ENCODE measurements at regions of chr21 and their contacts with region 1.

Region 1: DNA sequence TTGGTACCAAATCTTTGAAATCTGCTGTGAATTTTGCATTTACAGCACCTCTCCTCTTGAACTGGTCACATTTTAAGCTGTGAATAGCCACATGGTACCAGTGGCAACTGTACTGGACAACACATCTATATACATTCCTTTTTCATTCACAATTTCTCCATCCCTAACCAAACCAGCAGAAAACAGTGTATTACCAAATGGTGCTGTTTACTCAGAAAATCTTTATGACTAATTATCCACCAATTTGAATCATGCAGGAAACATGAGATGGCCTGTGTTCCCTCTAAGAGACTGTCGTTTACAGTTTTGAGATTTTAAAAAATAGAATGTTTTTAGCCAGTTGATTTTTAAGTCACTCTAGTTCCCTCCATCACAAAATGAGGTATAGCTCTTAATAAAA is 17.6 kb upstream of the CCT8 start:
- DNase-seq: no peak
- ATAC-seq: no peak
- H3K4me3 ChIP-seq: no peak overlapping the region
- H3K4me3 Mint-ChIP-seq: no peak overlapping the region
- H3K27ac ChIP-seq: no peak overlapping the region
- H3K27ac Mint-ChIP-seq: no peak overlapping the region
- H3K4me1 ChIP-seq: no peaks in the 10 kb centered on the region
- H3K4me1 Mint-ChIP-seq: peaks cover 0 to 3% (median 0%) of the 10 kb centered on the region in 3 donors
- H3K27me3 ChIP-seq: no peaks in the 10 kb centered on the region
- H3K27me3 Mint-ChIP-seq: no peaks in the 10 kb centered on the region

Region 2: GRCh38 chr21:29056005-29056404 is 35.0 kb before region 1 on chr21:
- CTCF ChIA-PET with region 1: no interaction called
- POLR2A ChIA-PET with region 1: no interaction called
- DNase-seq: no peak
- ATAC-seq: no peak
- H3K4me3 ChIP-seq: no peak overlapping the region
- H3K4me3 Mint-ChIP-seq: no peak overlapping the region
- H3K27ac ChIP-seq: no peak overlapping the region
- H3K27ac Mint-ChIP-seq: no peak overlapping the region
- H3K4me1 ChIP-seq: no peaks in the 10 kb centered on the region
- H3K4me1 Mint-ChIP-seq: no peaks in the 10 kb centered on the region
- H3K27me3 ChIP-seq: no peaks in the 10 kb centered on the region
- H3K27me3 Mint-ChIP-seq: no peaks in the 10 kb centered on the region

Region 3: DNA sequence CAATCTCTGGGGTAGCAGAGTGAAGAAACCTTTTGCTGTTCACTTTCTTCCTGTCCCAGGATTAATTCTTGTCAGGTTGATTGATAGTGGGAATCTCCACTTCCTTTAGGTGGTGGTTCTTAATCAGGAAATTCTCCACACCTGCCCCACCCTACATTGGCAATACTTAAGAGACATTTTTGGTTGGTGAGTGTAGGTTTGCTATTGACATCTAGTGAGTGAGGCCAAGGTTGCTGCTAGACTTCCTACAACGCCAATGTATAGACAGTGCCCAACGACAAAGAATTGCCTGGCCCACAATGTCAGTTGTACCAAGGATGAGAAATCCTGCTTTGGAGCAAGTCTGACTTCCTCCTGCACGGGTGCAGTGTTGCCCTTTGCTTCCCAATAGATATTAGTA is 77.9 kb after region 1 on chr21:
- CTCF ChIA-PET with region 1: no interaction called
- POLR2A ChIA-PET with region 1: no interaction called
- DNase-seq: no peak
- ATAC-seq: no peak
- H3K4me3 ChIP-seq: no peak overlapping the region
- H3K4me3 Mint-ChIP-seq: no peak overlapping the region
- H3K27ac ChIP-seq: no peak overlapping the region
- H3K27ac Mint-ChIP-seq: no peak overlapping the region
- H3K4me1 ChIP-seq: peaks cover 0 to 2% of the 10 kb centered on the region in 2 experiments
- H3K4me1 Mint-ChIP-seq: peaks cover 10 to 13% (median 10%) of the 10 kb centered on the region in 3 donors
- H3K27me3 ChIP-seq: no peaks in the 10 kb centered on the region
- H3K27me3 Mint-ChIP-seq: no peaks in the 10 kb centered on the region

Region 4: GRCh38 chr21:29219165-29219770 is 128.2 kb after region 1 on chr21:
- CTCF ChIA-PET with region 1: interaction called in 1 of 2 experiments, 10 read pairs
- POLR2A ChIA-PET with region 1: no interaction called
- DNase-seq: no peak
- ATAC-seq: no peak
- H3K4me3 ChIP-seq: no peak overlapping the region
- H3K4me3 Mint-ChIP-seq: no peak overlapping the region
- H3K27ac ChIP-seq: no peak overlapping the region
- H3K27ac Mint-ChIP-seq: no peak overlapping the region
- H3K4me1 ChIP-seq: no peaks in the 10 kb centered on the region
- H3K4me1 Mint-ChIP-seq: no peaks in the 10 kb centered on the region
- H3K27me3 ChIP-seq: no peaks in the 10 kb centered on the region
- H3K27me3 Mint-ChIP-seq: no peaks in the 10 kb centered on the region

Region 5: DNA sequence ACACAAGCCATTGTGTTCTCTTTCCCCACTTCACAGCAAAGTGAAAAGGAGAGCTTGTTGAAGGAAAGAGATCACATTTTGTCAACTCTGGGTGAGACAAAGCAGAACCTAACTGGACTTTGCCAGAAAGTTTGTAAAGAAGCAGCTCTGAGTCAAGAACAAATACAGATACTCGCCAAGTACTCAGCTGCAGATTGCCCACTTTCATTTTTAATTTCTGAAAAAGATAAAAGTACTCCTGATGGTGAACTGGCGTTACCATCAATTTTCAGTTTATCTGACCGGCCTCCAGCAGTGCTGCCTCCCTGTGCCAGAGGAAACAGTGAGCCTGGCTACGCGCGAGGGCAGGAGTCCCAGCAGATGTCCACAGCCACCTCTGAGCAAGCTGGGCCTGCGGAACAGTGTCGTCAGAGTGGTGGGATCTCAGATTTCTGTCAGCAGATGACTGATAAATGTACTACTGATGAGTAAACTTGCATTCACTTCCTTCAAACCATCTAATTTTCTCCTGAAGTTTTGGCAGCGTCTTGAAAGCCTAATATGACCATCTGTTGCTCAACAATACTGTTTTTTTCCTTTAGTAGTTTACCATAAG is 251.4 kb after region 1 on chr21:
- CTCF ChIA-PET with region 1: interaction called in 1 of 2 experiments, 11 read pairs
- POLR2A ChIA-PET with region 1: interaction called in 1 of 2 experiments, 3 read pairs
- DNase-seq: no peak
- ATAC-seq: no peak
- H3K4me3 ChIP-seq: no peak overlapping the region
- H3K4me3 Mint-ChIP-seq: peak overlapping the region in 1 of 3 donors; percentile 24
- H3K27ac ChIP-seq: no peak overlapping the region
- H3K27ac Mint-ChIP-seq: no peak overlapping the region
- H3K4me1 ChIP-seq: no peaks in the 10 kb centered on the region
- H3K4me1 Mint-ChIP-seq: peaks cover 11 to 20% (median 18%) of the 10 kb centered on the region in 3 donors
- H3K27me3 ChIP-seq: no peaks in the 10 kb centered on the region
- H3K27me3 Mint-ChIP-seq: no peaks in the 10 kb centered on the region

Region 6: GRCh38 chr21:29372063-29372802 is 281.2 kb after region 1 on chr21:
- CTCF ChIA-PET with region 1: interaction called, 13 to 16 read pairs
- POLR2A ChIA-PET with region 1: no interaction called
- DNase-seq: peak in 30 of 35 experiments; percentile 9 to 86 (median 34)
- ATAC-seq: peak; percentile 57 to 87 (median 69)
- H3K4me3 ChIP-seq: no peak overlapping the region
- H3K4me3 Mint-ChIP-seq: no peak overlapping the region
- H3K27ac ChIP-seq: no peak overlapping the region
- H3K27ac Mint-ChIP-seq: no peak overlapping the region
- H3K4me1 ChIP-seq: peaks cover 0 to 7% of the 10 kb centered on the region in 2 experiments
- H3K4me1 Mint-ChIP-seq: peaks cover 10 to 16% (median 10%) of the 10 kb centered on the region in 3 donors
- H3K27me3 ChIP-seq: no peaks in the 10 kb centered on the region
- H3K27me3 Mint-ChIP-seq: no peaks in the 10 kb centered on the region

Measured in T-cell (primary cell).